Dorsolateral prefrontal cortex (tissue), 120 donors: ENCODE measurements at regions of chr3 and their contacts with region 1.

Region 1: GRCh38 chr3:190192739-190193138 is 72.0 kb upstream of the P3H2 start:
- DNase-seq: no peak
- H3K4me3 ChIP-seq: no peak overlapping the region
- H3K27ac ChIP-seq: no peak overlapping the region
- H3K27me3 ChIP-seq: no peaks in the 10 kb centered on the region
- CTCF ChIP-seq: no peak

Region 2: DNA sequence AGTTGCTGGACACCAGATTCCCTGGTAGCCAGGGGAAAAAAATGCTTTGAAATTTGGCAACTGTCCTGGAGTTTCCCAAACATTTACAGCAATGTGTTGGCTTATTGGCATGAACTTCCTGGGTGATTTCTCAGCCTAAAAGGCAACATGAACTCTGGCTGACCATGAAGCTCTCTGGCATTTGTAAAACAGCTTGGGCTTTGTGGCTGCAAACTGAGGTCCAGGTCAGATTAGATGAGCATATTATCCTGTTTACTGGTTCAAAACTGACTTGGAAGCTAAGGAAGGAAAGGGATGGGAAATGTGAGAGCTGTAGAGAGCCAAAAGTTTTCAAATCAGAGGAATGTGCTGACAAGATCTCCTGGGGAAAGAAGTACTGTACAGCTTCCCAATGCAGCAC is 211.1 kb before region 1 on chr3:
- intact Hi-C with region 1: no loop called
- DNase-seq: no peak
- H3K4me3 ChIP-seq: no peak overlapping the region
- H3K27ac ChIP-seq: no peak overlapping the region
- H3K27me3 ChIP-seq: no peaks in the 10 kb centered on the region
- CTCF ChIP-seq: no peak

Region 3: GRCh38 chr3:190120269-190121060 is 72.3 kb before region 1 on chr3 and contains the start of gene P3H2:
- intact Hi-C with region 1: loop called in 1 of 2 experiments (anchors 5 kb)
- DNase-seq: peak; percentile 14 to 88 (median 77)
- H3K4me3 ChIP-seq: peak within 1 kb of the TSS; percentile 51 to 92 (median 79)
- H3K27ac ChIP-seq: peak within 1 kb of the TSS in 57 of 59 donors; percentile 17 to 93 (median 81)
- H3K27me3 ChIP-seq: no peaks in the 10 kb centered on the region
- CTCF ChIP-seq: peak in 51 of 56 donors; percentile 20 to 70 (median 48)
- total RNA-seq, gene P3H2: 2.9 to 14.9 (median 8.8) TPM

Region 4: GRCh38 chr3:190169877-190170276 is 22.9 kb before region 1 on chr3:
- intact Hi-C with region 1: no loop called
- DNase-seq: no peak
- H3K4me3 ChIP-seq: peak overlapping the region in 1 of 59 donors; percentile 5
- H3K27ac ChIP-seq: no peak overlapping the region
- H3K27me3 ChIP-seq: no peaks in the 10 kb centered on the region
- CTCF ChIP-seq: no peak